ENCODE measurements at regions of chr9 and their contacts with region 1.

Region 1: GRCh38 chr9:114930056-114930812 is at the start of gene TNFSF8:
- DNase-seq: peak; percentile 78
- ATAC-seq: peak; percentile 80
- H3K4me3 Mint-ChIP-seq: peak within 1 kb of the TSS; percentile 98
- H3K27ac Mint-ChIP-seq: peak within 1 kb of the TSS; percentile 97
- H3K4me1 Mint-ChIP-seq: peaks cover 42% of the 10 kb centered on the region
- H3K27me3 Mint-ChIP-seq: no peaks in the 10 kb centered on the region
- total RNA-seq, gene TNFSF8: 54.2 to 56.4 TPM

Region 2: DNA sequence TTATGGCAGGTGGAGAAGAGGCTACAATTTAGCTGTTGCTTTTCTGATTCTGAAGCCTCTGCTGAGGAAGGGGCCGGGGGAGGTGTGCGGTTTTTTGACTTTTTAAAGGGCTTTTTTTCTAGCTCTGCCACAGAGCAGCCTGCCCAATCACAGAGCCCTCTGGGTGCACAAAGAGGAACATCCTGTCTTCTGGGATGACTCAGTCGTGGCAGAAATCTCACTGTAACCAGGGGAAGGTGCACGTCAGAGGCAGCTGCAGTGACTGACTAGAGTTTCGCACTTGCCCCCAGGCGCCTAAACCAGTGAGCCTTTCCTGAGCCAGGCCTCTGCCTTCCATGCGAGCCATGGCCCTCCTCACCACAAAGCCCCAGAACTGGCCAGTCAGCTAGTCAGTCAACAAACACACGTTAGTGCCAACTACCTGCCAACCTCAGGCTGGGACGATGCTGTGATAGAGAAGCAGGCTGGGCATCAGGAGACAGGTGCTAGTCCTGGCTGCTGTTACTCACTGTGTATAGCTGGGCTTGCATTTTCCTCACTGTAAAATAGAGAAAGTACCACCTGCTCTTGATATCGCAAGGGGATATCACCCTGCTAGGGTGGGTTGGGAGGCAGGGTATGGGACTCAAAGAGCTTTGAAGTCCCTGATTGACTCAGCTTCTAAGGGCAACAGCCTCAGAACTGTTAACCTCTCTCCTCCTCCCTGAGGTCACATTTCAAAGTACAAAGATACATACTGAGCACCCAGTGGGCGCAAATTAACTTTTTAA is 544.6 kb before region 1 on chr9:
- POLR2A ChIA-PET with region 1: interaction called, 11 read pairs
- DNase-seq: peak; percentile 82
- ATAC-seq: peak; percentile 78
- H3K4me3 Mint-ChIP-seq: peak overlapping the region; percentile 99
- H3K27ac Mint-ChIP-seq: peak overlapping the region; percentile 99
- H3K4me1 Mint-ChIP-seq: peaks cover 48% of the 10 kb centered on the region
- H3K27me3 Mint-ChIP-seq: no peaks in the 10 kb centered on the region

Region 3: GRCh38 chr9:114696814-114697544 is 233.3 kb before region 1 on chr9:
- POLR2A ChIA-PET with region 1: interaction called, 25 read pairs
- DNase-seq: peak; percentile 63
- ATAC-seq: peak; percentile 81
- H3K4me3 Mint-ChIP-seq: peak overlapping the region; percentile 63
- H3K27ac Mint-ChIP-seq: peak overlapping the region; percentile 100
- H3K4me1 Mint-ChIP-seq: peaks cover 77% of the 10 kb centered on the region
- H3K27me3 Mint-ChIP-seq: no peaks in the 10 kb centered on the region

Region 4: GRCh38 chr9:114738581-114739316 is 191.5 kb before region 1 on chr9:
- POLR2A ChIA-PET with region 1: interaction called, 16 read pairs
- DNase-seq: peak; percentile 55
- ATAC-seq: peak; percentile 84
- H3K4me3 Mint-ChIP-seq: peak overlapping the region; percentile 7
- H3K27ac Mint-ChIP-seq: peak overlapping the region; percentile 79
- H3K4me1 Mint-ChIP-seq: peaks cover 54% of the 10 kb centered on the region
- H3K27me3 Mint-ChIP-seq: no peaks in the 10 kb centered on the region

Region 5: DNA sequence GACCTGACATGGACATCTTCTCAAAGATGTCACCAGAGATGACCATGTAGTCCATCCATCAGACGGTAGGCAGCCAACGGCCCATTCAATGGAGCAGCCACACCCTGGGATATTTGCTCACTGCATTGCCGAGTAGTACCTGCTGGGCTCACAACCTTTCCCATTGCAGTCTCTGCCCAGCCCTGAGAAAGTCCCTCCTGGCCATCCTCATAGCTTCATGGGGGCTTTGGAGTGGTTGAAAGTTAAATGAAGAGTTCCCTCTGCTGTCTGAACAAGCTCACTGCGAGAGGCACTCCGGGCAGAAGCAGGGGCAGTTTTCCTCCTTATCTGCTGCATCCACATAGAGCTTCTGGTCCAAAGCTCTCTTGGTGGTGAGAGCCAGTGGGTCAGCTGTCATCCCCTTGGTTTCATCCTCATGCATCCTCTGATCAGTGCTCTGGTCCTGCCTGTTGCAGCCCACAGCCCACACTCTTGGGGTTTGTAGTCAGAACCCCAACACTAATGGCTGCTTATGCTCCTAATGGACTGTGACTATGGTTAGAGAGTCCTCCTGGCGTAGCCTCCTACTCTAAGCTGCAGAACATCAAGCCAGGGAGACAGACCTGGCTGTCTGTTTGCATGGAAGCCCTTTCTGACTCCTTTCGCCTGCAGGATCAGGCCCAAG is 23.2 kb before region 1 on chr9:
- POLR2A ChIA-PET with region 1: interaction called, 137 read pairs
- DNase-seq: no peak
- ATAC-seq: peak; percentile 19
- H3K4me3 Mint-ChIP-seq: peak overlapping the region; percentile 29
- H3K27ac Mint-ChIP-seq: peak overlapping the region; percentile 87
- H3K4me1 Mint-ChIP-seq: peaks cover 80% of the 10 kb centered on the region
- H3K27me3 Mint-ChIP-seq: no peaks in the 10 kb centered on the region

Region 6: GRCh38 chr9:114919611-114920010 is 10.6 kb before region 1 on chr9:
- POLR2A ChIA-PET with region 1: interaction called, 34 read pairs
- DNase-seq: no peak
- ATAC-seq: no peak
- H3K4me3 Mint-ChIP-seq: no peak overlapping the region
- H3K27ac Mint-ChIP-seq: no peak overlapping the region
- H3K4me1 Mint-ChIP-seq: peaks cover 80% of the 10 kb centered on the region
- H3K27me3 Mint-ChIP-seq: no peaks in the 10 kb centered on the region

Region 7: GRCh38 chr9:114988962-114989599 is 58.8 kb after region 1 on chr9:
- POLR2A ChIA-PET with region 1: interaction called, 27 read pairs
- DNase-seq: no peak
- ATAC-seq: peak; percentile 46
- H3K4me3 Mint-ChIP-seq: peak overlapping the region; percentile 70
- H3K27ac Mint-ChIP-seq: peak overlapping the region; percentile 85
- H3K4me1 Mint-ChIP-seq: peaks cover 39% of the 10 kb centered on the region
- H3K27me3 Mint-ChIP-seq: no peaks in the 10 kb centered on the region

Region 8: GRCh38 chr9:115000217-115000639 is 70.0 kb after region 1 on chr9:
- POLR2A ChIA-PET with region 1: no interaction called
- DNase-seq: no peak
- ATAC-seq: no peak
- H3K4me3 Mint-ChIP-seq: no peak overlapping the region
- H3K27ac Mint-ChIP-seq: no peak overlapping the region
- H3K4me1 Mint-ChIP-seq: peaks cover 14% of the 10 kb centered on the region
- H3K27me3 Mint-ChIP-seq: peaks cover 5% of the 10 kb centered on the region

Region 9: DNA sequence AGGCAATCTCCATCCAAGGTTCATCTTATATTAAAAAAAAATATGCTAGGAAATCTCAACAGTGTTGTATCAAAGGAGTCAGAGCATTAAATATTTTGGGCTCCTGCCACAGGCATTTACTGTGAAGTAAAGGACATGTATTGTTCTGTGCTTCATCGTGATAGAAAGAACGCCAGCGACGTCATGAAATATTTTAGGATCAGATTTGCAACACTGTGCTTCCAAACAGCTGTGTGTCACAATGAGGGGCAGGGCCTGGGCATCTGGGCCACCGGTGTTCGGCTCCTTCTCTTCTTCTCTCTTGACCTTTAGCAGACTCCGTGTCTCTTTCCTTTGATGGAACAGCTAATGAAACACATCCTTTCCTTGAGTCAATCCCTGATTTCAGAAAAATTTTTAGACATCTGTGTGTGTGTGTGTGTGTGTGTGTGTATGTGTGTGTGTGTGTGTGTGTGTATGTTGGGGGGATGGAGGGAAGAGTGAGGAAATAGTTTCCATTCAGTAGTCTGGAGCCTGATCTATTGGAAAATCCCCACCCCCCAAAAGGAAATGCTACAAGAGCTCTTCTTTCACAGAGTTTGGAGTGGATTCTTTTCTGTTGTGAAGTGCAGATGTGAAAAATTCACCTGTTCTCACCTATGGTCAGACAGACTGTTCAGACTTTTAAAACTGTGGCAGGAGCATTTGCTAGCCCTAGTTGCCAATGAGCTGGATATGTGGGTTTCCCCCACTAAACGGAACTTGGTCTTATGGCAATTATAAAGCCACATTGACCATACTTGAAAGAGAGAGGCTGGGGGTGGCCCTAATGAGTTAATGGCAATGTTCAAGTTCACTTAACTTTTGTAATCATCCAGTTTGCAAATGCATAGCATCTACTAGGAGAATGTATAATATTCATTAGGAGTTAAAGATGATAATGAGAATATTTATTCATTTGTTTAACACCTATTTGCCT is 205.9 kb after region 1 on chr9:
- POLR2A ChIA-PET with region 1: no interaction called
- DNase-seq: no peak
- ATAC-seq: no peak
- H3K4me3 Mint-ChIP-seq: no peak overlapping the region
- H3K27ac Mint-ChIP-seq: no peak overlapping the region
- H3K4me1 Mint-ChIP-seq: peaks cover under 1% of the 10 kb centered on the region
- H3K27me3 Mint-ChIP-seq: peaks cover 40% of the 10 kb centered on the region

Region 10: GRCh38 chr9:115164511-115164974 is 234.3 kb after region 1 on chr9:
- POLR2A ChIA-PET with region 1: no interaction called
- DNase-seq: no peak
- ATAC-seq: no peak
- H3K4me3 Mint-ChIP-seq: no peak overlapping the region
- H3K27ac Mint-ChIP-seq: no peak overlapping the region
- H3K4me1 Mint-ChIP-seq: no peaks in the 10 kb centered on the region
- H3K27me3 Mint-ChIP-seq: peaks cover 7% of the 10 kb centered on the region

Measured in activated naive CD8-positive, alpha-beta T cell treated with anti-CD3 and anti-CD28 coated beads, Interleukin-2, amount 10 ng/mL, durations not matched to agents 7 days and 5 days (primary cell).